Adrenal gland (tissue), 19 donors: ENCODE measurements at regions of chr7 and their contacts with region 1.

Region 1: DNA sequence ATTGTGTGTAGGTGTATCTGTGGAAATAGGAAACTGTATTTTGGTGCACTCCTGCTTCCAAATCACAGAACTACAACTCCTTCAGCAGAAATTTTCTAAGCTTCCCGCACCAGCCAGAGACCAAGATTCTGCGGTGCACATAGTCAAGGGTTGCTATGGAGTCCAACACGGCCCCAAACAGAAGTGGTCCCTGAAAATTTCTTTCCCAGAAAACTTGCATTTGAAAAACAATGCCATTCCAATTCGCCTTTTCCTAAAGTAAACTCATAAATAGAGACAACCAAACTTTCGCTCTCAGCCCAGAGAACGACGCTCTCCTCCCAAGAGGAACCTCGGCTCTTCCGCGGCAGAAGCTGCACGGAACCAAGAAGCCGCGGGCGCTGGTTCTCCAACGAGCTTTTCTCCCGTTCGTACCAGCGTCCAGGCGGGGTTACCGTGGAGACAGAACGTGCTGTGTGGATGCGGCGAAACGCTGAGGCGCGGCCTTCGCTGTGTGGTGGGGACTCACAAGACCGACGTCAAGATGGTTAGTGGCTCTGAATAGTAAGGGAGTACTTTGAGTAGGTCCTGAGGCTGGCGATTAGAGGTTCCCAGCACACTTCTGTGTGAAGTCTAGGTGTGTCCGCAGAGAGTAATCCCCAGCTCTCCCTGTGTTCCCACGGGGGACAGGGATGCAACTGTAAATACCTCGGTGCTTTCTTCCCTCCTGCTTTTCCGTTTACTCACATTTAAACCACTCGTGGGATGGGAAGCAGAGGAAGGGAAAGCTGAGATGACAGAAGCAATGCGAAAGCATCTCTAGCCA is 24.0 kb upstream of the ZC3HAV1 start:
- DNase-seq: peak; percentile 83 to 93 (median 87)
- H3K4me3 ChIP-seq: peak overlapping the region in 3 of 4 donors; percentile 5 to 81 (median 33)
- H3K27ac ChIP-seq: peak overlapping the region in 2 of 5 donors; percentile 62 to 64
- H3K4me1 ChIP-seq: peaks cover 7 to 25% of the 10 kb centered on the region in 2 donors
- H3K27me3 ChIP-seq: no peaks in the 10 kb centered on the region
- CTCF ChIP-seq: no peak
- POLR2A ChIP-seq: no peak

Region 2: DNA sequence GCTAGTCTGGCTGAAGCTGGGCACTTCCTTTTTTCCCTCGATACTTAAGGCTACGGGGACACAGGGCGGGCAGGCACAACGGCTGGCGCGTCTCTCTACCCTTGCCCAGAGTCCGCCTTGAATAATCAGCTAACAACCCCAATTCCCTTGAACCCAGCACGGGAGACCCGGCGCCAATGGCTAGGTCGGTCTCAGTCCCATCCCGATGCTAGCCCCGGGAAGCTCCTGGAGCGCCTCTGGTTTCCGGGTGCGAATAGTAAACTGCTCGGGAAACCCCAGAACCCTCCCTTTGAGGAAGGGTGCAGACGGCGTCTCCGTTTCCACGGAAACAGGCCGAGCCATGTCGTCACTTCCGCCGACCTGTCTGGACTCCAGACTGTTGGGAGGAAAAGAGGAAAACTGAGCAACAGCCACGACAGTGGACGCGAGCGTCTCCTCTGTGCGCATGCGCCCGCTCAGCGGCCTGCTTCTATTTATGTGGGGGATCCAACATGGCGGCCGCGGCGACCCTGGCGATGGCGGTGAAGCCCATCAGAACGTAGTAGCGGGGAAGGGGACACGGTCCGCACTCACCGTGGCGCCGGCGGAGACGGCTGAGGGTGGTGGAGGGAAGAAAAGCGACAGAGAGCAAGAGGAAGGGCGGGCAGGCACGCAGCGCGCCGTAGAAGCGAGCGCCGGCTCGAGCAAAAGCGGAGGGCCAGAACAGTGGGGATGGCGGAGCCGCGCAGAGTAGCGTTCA is 97.4 kb after region 1 on chr7 and contains the start of gene UBN2:
- intact Hi-C with region 1: loop called in 1 of 2 experiments (anchors 10 kb)
- DNase-seq: peak; percentile 97 to 99 (median 97)
- H3K4me3 ChIP-seq: peak within 1 kb of the TSS; percentile 76 to 100 (median 94)
- H3K27ac ChIP-seq: peak within 1 kb of the TSS; percentile 83 to 98 (median 96)
- H3K4me1 ChIP-seq: peaks cover 8 to 28% of the 10 kb centered on the region in 2 donors
- H3K27me3 ChIP-seq: no peaks in the 10 kb centered on the region
- CTCF ChIP-seq: no peak
- POLR2A ChIP-seq: peak; percentile 5 to 84
- total RNA-seq, gene UBN2: 7.1 to 27.5 (median 17.2) TPM